PC-9 (cell line): ENCODE measurements at regions of chr6 and their contacts with region 1.

Region 1: GRCh38 chr6:17758119-17758518 is 51.4 kb upstream of the NUP153 start:
- DNase-seq: no peak
- H3K4me3 ChIP-seq: no peak overlapping the region
- H3K27ac ChIP-seq: no peak overlapping the region
- H3K4me1 ChIP-seq: no peaks in the 10 kb centered on the region
- H3K27me3 ChIP-seq: no peaks in the 10 kb centered on the region
- CTCF ChIP-seq: no peak

Region 2: GRCh38 chr6:17688481-17688880 is 69.6 kb before region 1 on chr6:
- CTCF ChIA-PET with region 1: no interaction called
- POLR2A ChIA-PET with region 1: interaction called, 11 read pairs
- intact Hi-C with region 1: no loop called
- DNase-seq: no peak
- H3K4me3 ChIP-seq: no peak overlapping the region
- H3K27ac ChIP-seq: no peak overlapping the region
- H3K4me1 ChIP-seq: no peaks in the 10 kb centered on the region
- H3K27me3 ChIP-seq: no peaks in the 10 kb centered on the region
- CTCF ChIP-seq: no peak

Region 3: GRCh38 chr6:17700421-17701416 is 57.4 kb before region 1 on chr6:
- CTCF ChIA-PET with region 1: no interaction called
- POLR2A ChIA-PET with region 1: interaction called, 10 read pairs
- intact Hi-C with region 1: loop called (anchors 5 kb)
- DNase-seq: no peak
- H3K4me3 ChIP-seq: no peak overlapping the region
- H3K27ac ChIP-seq: no peak overlapping the region; the same call in 1 of the 2 replicates
- H3K4me1 ChIP-seq: peaks cover 18% of the 10 kb centered on the region
- H3K27me3 ChIP-seq: no peaks in the 10 kb centered on the region
- CTCF ChIP-seq: no peak

Region 4: DNA sequence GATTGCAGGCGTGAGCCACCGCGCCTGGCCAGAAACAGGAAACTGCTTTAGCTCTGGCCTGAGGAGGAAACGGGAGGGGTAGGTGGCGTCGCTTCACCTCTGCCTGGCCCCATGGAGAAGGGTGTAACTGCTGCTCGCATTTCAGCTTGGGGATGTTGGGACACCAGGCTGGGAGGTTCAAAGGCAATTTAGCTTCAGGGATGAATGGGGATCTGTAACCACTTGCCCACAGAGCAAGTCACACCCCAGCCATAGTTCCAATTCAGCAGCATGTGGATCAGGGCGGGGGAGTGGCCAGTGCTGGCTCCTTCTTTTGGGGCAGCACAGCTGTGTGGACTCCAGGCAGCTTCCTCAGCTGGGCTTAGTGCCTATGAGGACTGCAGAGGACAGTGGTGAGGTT is 16.6 kb before region 1 on chr6:
- CTCF ChIA-PET with region 1: no interaction called
- POLR2A ChIA-PET with region 1: interaction called, 10 read pairs
- intact Hi-C with region 1: no loop called
- DNase-seq: peak in 1 of 2 experiments; percentile 3
- H3K4me3 ChIP-seq: no peak overlapping the region
- H3K27ac ChIP-seq: no peak overlapping the region
- H3K4me1 ChIP-seq: no peaks in the 10 kb centered on the region
- H3K27me3 ChIP-seq: no peaks in the 10 kb centered on the region
- CTCF ChIP-seq: no peak

Region 5: DNA sequence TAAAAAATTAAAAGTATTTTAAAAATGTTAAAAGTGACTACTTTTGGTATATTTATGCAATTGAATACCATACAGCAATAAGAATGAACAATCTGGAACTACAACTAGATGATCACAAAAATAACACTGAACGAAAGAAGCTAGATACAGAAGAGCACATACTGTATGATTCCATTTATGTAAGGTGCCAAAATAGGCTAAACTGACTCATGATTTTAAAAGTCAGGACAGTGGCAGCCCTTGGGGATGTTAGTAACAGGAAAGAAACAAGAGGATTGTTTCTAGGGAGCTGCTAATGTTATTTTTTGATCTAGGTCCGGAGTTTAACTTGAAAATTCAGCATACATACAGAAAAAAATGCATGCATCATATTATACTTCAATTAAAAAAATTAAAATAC is 187.0 kb after region 1 on chr6:
- CTCF ChIA-PET with region 1: no interaction called
- POLR2A ChIA-PET with region 1: no interaction called
- intact Hi-C with region 1: no loop called
- DNase-seq: no peak
- H3K4me3 ChIP-seq: no peak overlapping the region
- H3K27ac ChIP-seq: no peak overlapping the region
- H3K4me1 ChIP-seq: no peaks in the 10 kb centered on the region
- H3K27me3 ChIP-seq: no peaks in the 10 kb centered on the region
- CTCF ChIP-seq: no peak